A673 (cell line): ENCODE measurements at regions of chr11 and their contacts with region 1.

Region 1: GRCh38 chr11:129695575-129696308 is 119.9 kb upstream of the TMEM45B start:
- DNase-seq: peak; percentile 92
- H3K4me3 ChIP-seq: peak overlapping the region; percentile 39
- H3K27ac ChIP-seq: peak overlapping the region; percentile 71
- H3K4me1 ChIP-seq: peaks cover 45% of the 10 kb centered on the region
- H3K27me3 ChIP-seq: no peaks in the 10 kb centered on the region
- CTCF ChIP-seq: peak; percentile 78

Region 2: DNA sequence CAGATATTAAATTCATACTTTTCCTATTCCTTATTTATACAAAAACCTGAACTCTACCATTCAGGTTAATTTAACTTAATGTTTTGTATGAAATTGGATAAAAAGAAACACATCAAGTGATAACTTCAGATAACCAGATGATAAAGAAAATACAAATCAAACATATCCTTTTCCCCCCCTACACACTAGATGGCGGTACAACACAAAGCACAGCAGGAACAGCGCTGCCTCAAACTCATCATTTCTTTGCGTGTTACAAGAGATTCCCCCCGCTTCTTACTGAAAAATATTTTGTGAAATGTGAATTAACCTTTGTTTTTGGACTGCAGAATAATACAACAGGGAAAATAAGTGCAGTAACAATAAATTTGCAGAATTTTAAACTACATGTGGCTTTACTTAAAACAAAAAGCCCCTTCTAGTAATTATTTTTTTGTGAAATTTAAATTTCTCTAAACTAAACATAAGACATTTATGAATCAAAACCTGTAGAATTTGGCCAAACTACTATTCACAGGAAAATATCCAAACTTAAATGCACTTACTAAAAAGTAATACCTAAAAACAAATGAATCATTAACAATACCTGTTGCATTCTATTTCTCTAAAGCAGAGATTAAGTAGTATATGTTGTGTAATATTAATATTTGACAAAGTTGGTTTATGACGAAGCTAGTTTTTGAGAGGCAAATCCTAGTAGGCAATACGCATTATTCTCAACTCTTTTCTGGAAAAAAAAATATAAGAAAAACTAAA is 578.0 kb before region 1 on chr11:
- CTCF ChIA-PET with region 1: interaction called, 4 read pairs
- POLR2A ChIA-PET with region 1: no interaction called
- intact Hi-C with region 1: loop called (anchors 5 kb)
- DNase-seq: peak; percentile 87
- H3K4me3 ChIP-seq: no peak overlapping the region
- H3K27ac ChIP-seq: no peak overlapping the region
- H3K4me1 ChIP-seq: no peaks in the 10 kb centered on the region
- H3K27me3 ChIP-seq: no peaks in the 10 kb centered on the region
- CTCF ChIP-seq: peak; percentile 98

Region 3: DNA sequence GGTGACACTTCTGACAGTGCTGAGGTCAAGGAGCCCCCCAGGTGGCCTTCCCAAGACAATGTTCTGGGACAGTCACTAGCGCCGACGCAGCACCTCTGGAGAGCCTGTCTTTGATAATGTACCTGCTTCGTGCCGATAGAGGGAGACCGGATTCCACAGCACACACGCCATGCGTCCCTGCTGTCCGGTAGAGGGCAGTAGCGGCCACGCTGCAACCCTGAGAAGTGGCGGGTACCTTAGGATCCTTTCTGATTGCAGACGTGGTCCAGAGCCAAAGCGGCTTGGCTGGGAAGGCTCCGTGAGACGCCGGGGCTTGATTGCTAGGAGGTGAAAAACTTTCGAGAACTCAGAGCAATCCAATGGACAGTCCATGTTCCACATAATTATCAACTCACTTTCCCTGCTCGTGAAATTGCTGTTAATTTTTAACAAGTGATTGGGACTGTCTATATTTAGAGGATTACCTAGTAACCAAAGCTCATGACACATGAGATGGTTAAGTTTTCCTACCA is 331.5 kb before region 1 on chr11:
- CTCF ChIA-PET with region 1: interaction called, 6 read pairs
- POLR2A ChIA-PET with region 1: no interaction called
- intact Hi-C with region 1: loop called (anchors 1 kb)
- DNase-seq: peak; percentile 97
- H3K4me3 ChIP-seq: peak overlapping the region; percentile 10
- H3K27ac ChIP-seq: no peak overlapping the region
- H3K4me1 ChIP-seq: peaks cover 39% of the 10 kb centered on the region
- H3K27me3 ChIP-seq: no peaks in the 10 kb centered on the region
- CTCF ChIP-seq: peak; percentile 100

Region 4: DNA sequence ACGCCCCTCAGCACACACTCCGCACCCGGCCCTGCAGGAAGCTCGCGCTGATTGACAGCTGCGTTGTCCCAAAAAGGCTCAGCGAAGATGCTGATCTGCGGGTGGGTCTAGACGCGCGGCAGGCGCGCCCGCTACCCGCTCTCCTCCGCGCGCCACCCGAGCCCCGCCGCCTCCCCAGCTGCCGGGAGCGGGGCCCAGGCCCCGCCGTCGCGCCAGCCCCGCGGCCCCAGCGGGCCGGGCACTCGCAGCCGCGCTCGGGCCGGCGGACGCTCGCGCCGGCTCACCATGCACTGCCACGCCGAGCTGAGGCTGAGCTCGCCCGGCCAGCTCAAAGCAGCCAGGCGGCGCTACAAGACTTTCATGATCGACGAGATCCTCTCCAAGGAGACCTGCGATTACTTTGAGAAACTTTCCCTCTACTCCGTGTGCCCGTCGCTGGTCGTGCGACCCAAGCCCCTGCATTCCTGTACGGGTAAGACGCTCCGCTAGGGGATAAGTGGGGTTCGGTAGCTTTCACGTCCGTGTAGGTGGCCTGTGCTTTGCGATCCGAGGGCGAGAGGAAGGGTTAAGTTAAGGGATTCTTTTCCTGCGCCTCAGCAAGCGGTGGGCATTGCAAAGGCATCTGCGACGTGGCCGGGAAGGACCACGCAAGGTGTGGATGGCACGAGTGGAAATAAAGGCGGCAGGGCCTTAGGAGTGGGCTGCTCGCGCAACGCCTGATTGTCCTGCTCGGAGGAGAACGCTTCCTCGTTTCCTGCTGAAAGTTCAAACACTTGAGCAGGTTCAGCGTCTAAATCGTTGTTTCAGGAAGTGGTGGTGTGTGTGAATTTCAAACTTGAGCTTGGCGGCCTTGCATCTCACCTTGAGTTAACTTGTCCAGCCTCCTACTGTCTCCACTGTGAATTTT is 319.7 kb before region 1 on chr11 and contains the start of gene BARX2:
- CTCF ChIA-PET with region 1: interaction called, 18 read pairs
- POLR2A ChIA-PET with region 1: no interaction called
- intact Hi-C with region 1: loop called (anchors 1 kb)
- DNase-seq: peak; percentile 94
- H3K4me3 ChIP-seq: peak within 1 kb of the TSS; percentile 74
- H3K27ac ChIP-seq: peak within 1 kb of the TSS; percentile 95
- H3K4me1 ChIP-seq: peaks cover 49% of the 10 kb centered on the region
- H3K27me3 ChIP-seq: no peaks in the 10 kb centered on the region
- CTCF ChIP-seq: peak; percentile 70
- total RNA-seq, gene BARX2: 36.4 and 43.0 TPM in 2 replicates

Region 5: DNA sequence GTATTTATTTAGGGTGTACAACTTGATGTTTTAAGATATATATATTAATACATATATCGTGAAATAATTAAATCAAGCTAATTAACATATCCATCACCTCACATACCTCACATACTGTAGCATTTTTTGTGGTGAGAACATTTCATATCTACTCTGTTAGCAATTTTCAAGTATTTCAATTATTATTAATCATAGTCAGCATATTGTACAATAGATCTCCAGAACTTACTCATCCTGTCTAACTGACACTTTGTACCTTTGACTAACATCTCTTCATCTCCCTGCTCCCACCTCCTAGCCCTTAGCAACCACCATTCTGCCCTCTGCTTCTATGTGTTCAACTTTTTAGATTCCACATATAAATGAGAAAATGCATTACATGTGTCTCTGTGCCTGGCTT is 211.7 kb before region 1 on chr11:
- CTCF ChIA-PET with region 1: no interaction called
- POLR2A ChIA-PET with region 1: no interaction called
- intact Hi-C with region 1: no loop called
- DNase-seq: no peak
- H3K4me3 ChIP-seq: no peak overlapping the region
- H3K27ac ChIP-seq: no peak overlapping the region
- H3K4me1 ChIP-seq: no peaks in the 10 kb centered on the region
- H3K27me3 ChIP-seq: no peaks in the 10 kb centered on the region
- CTCF ChIP-seq: no peak

Region 6: GRCh38 chr11:129543515-129544290 is 152.0 kb before region 1 on chr11:
- CTCF ChIA-PET with region 1: interaction called, 13 read pairs
- POLR2A ChIA-PET with region 1: no interaction called
- intact Hi-C with region 1: loop called (anchors 1 kb)
- DNase-seq: peak; percentile 98
- H3K4me3 ChIP-seq: peak overlapping the region; percentile 23
- H3K27ac ChIP-seq: peak overlapping the region; percentile 97
- H3K4me1 ChIP-seq: peaks cover 43% of the 10 kb centered on the region
- H3K27me3 ChIP-seq: no peaks in the 10 kb centered on the region
- CTCF ChIP-seq: no peak